Posterior vena cava (tissue), 2 donors: ENCODE measurements at regions of chr13 and their contacts with region 1.

Region 1: GRCh38 chr13:32153056-32153455 is 121.5 kb downstream of the FRY start:
- DNase-seq: no peak

Region 2: DNA sequence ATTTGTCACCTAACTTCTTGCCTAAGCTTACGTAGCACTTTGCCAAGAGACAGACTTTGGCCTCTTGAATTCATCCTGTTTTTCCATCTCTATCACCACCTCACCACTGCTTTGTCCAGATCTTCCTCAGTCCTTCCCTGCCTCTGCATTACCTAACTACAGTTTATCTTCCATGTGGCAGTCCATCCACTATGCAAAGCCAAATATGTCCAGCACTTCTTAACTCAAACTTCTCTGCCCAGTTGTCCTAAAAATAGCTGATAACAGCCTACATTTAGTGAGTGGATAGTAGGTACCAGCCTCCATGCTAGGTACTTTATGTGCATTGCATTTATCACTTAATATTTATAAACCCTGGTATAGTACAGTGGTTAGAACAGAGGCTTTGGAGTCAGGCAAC is 50.7 kb after region 1 on chr13:
- intact Hi-C with region 1: loop called in 1 of 2 experiments (anchors 2 kb)
- DNase-seq: no peak